ENCODE measurements at regions of chr17 and their contacts with region 1.

Region 1: DNA sequence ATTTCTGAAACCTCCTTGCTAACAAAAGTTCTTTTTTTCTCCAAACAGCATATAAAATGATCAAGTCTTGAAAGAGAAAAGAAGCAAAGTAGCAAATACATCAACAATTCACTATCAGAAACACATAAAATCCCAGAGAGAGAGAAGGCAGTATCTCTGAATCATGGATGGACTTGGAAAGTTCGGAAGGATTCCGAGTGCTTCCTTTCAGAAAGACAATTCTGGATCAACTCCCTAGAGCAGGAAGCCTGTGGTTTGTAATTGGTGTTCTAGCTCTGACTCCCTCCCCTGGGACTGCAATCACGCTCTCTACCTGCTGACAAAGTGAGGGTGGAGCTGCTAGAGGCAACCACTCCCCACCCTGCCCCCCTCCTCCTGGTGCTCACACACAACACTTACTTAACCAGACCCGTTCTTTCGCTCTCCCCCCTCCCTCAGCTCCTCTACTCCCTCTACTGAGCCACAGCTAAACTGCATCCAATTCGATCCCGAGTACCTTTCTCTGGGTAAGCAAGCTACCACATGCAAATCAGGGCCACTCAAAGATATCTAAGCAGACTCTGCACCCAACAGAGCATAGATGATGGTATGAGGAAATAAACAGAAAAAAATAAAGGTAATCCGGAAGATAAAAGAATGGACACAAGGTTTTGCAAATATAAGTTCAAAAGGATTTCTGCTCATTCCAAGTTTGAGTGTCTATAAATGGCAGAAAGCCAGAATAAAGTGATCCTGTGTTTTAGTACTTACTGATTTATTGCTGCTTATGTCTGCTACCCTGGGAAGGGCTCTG is at the start of gene RNF43:
- DNase-seq: peak; percentile 48
- H3K4me3 ChIP-seq: peak within 1 kb of the TSS; percentile 48
- H3K27ac ChIP-seq: no peak within 1 kb of the TSS
- H3K27me3 ChIP-seq: peaks cover 10% of the 10 kb centered on the region
- CTCF ChIP-seq: peak; percentile 93
- polyA plus RNA-seq, gene RNF43: not detected in 2 replicates

Region 2: GRCh38 chr17:58210922-58211321 is 206.6 kb before region 1 on chr17:
- CTCF ChIA-PET with region 1: no interaction called
- POLR2A ChIA-PET with region 1: no interaction called
- DNase-seq: no peak
- H3K4me3 ChIP-seq: no peak overlapping the region
- H3K27ac ChIP-seq: no peak overlapping the region
- H3K27me3 ChIP-seq: no peaks in the 10 kb centered on the region
- CTCF ChIP-seq: no peak

Region 3: GRCh38 chr17:58232707-58233156 is 184.8 kb before region 1 on chr17:
- CTCF ChIA-PET with region 1: no interaction called
- POLR2A ChIA-PET with region 1: no interaction called
- DNase-seq: peak; percentile 27
- H3K4me3 ChIP-seq: no peak overlapping the region
- H3K27ac ChIP-seq: no peak overlapping the region
- H3K27me3 ChIP-seq: peaks cover 20% of the 10 kb centered on the region
- CTCF ChIP-seq: no peak

Region 4: GRCh38 chr17:58263773-58264172 is 153.7 kb before region 1 on chr17:
- CTCF ChIA-PET with region 1: interaction called, 10 read pairs
- POLR2A ChIA-PET with region 1: no interaction called
- DNase-seq: no peak
- H3K4me3 ChIP-seq: no peak overlapping the region
- H3K27ac ChIP-seq: no peak overlapping the region
- H3K27me3 ChIP-seq: peaks cover 8% of the 10 kb centered on the region
- CTCF ChIP-seq: no peak

Region 5: GRCh38 chr17:58303971-58304725 is 113.3 kb before region 1 on chr17:
- CTCF ChIA-PET with region 1: interaction called, 12 read pairs
- POLR2A ChIA-PET with region 1: no interaction called
- DNase-seq: no peak
- H3K4me3 ChIP-seq: no peak overlapping the region
- H3K27ac ChIP-seq: no peak overlapping the region
- H3K27me3 ChIP-seq: peaks cover 2% of the 10 kb centered on the region
- CTCF ChIP-seq: peak; percentile 74

Region 6: GRCh38 chr17:58352014-58352842 is 65.3 kb before region 1 on chr17 and contains the start of gene SUPT4H1:
- CTCF ChIA-PET with region 1: interaction called, 5 read pairs
- POLR2A ChIA-PET with region 1: interaction called, 18 read pairs
- DNase-seq: peak; percentile 85
- H3K4me3 ChIP-seq: peak within 1 kb of the TSS; percentile 98
- H3K27ac ChIP-seq: peak within 1 kb of the TSS; percentile 87
- H3K27me3 ChIP-seq: peaks cover 4% of the 10 kb centered on the region
- CTCF ChIP-seq: no peak
- polyA plus RNA-seq, gene SUPT4H1: 178 and 191 TPM in 2 replicates

Region 7: DNA sequence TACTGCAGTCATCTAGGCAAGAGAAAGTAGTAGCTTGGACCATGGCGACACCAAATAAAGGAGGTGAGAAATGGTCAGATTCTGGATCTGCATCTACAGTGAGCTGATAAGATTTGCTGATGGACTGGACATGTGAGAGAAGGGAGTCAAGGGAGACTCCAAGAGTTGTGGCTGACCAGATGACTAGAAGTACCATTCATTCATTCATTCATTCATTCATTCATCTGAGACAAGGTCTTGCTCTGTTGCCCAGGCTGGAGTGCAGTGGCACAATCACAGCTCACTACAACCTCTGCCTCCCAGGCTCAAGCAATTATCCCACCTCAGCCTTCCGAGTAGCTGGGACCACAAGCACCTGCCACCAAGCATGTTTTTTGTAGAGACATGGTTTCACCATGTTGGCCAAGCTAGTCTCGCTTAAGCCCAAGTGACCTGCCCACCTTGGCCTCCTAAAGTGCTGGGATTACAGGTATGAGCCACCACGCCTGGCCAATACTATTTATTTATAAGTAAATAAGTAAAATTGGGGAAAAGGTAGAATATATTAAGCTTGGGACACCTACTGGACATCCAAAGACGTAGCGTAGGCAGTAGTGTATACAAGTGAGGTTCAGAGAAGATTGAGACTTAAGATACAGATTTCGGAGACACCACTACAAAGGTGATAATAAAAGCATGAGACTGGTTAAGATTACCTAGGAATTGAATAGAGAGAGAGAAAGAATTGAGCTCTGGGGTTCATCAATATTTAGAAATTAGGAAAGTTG is 15.5 kb after region 1 on chr17:
- CTCF ChIA-PET with region 1: interaction called, 15 read pairs
- POLR2A ChIA-PET with region 1: no interaction called
- DNase-seq: no peak
- H3K4me3 ChIP-seq: no peak overlapping the region
- H3K27ac ChIP-seq: no peak overlapping the region
- H3K27me3 ChIP-seq: no peaks in the 10 kb centered on the region
- CTCF ChIP-seq: no peak